ENCODE measurements at regions of chr12 and their contacts with region 1.

Region 1: DNA sequence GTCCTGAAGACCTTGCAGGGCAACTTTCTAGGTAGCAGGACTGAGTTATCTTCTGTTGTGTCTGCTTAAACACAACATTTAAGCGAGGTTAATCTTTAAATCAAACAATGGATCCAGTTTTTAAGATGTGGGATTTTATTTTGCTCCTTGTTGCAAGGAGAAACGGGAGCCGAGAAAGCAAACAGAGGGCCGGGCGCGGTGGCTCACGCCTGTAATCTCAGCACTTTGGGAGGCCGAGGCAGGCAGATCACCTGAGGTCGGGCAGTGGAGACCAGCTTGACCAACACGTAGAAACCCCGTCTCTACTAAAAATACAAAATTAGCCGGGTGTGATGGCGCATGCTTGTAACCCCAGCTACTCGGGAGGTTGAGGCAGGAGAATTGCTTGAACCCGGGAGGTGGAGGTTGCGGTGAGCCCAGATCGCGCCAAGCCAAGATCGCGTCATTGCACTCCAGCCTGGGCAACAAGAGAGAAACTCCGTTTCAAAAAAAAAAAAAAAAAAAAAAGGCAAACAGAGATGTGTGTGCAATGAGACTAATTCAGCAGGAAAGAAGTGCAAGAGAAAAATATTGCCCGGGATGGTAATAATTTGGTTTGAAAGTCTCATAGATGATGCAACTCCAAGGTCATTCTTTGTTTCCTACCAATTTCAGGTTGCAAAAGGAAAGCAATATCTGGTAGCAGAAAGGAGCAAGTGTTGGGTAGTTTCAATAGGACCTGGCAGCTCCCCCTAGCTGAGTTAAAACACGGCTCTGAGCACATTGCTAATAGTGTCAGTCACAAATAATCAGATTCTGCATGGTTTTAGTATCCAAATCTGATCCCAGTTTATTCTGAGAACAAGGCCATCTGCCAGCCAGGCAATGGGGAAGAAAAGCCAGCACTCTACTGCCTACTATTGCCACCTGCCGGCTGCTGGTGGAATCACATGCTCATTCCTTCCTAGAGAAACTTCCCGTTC is 141.4 kb downstream of the PPM1H start:
- DNase-seq: peak; percentile 47 to 85 (median 71)
- ATAC-seq: peak; percentile 83
- H3K4me3 ChIP-seq: no peak overlapping the region
- H3K4me3 Mint-ChIP-seq: no peak overlapping the region
- H3K27ac ChIP-seq: no peak overlapping the region
- H3K27ac Mint-ChIP-seq: no peak overlapping the region
- H3K4me1 ChIP-seq: no peaks in the 10 kb centered on the region
- H3K4me1 Mint-ChIP-seq: no peaks in the 10 kb centered on the region
- H3K27me3 ChIP-seq: no peaks in the 10 kb centered on the region
- H3K27me3 Mint-ChIP-seq: peaks cover 3% of the 10 kb centered on the region
- CTCF ChIP-seq: peak; percentile 93

Region 2: DNA sequence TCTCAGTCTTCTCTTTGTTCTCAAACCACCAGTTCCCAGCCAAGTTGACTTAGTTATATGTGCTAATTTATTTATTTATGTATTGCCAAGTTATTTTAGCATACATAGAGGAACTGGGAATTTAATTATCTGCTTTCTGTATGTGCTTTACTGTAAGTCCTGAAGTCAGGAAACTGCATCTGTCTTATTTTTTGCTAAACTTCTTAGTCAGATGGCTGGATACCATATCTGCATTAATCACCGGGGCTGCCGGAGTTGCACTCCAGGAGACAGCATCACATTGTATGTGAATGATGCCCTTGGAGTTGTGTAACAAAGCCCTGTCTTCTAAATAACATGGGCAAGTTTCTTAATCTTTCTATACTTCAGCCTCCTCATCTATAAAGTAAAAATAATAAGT is 230.7 kb before region 1 on chr12:
- CTCF ChIA-PET with region 1: interaction called, 10 read pairs
- POLR2A ChIA-PET with region 1: no interaction called
- intact Hi-C with region 1: no loop called
- DNase-seq: no peak
- ATAC-seq: no peak
- H3K4me3 ChIP-seq: no peak overlapping the region
- H3K4me3 Mint-ChIP-seq: no peak overlapping the region
- H3K27ac ChIP-seq: no peak overlapping the region
- H3K27ac Mint-ChIP-seq: no peak overlapping the region
- H3K4me1 ChIP-seq: no peaks in the 10 kb centered on the region
- H3K4me1 Mint-ChIP-seq: no peaks in the 10 kb centered on the region
- H3K27me3 ChIP-seq: no peaks in the 10 kb centered on the region
- H3K27me3 Mint-ChIP-seq: no peaks in the 10 kb centered on the region
- CTCF ChIP-seq: no peak

Region 3: DNA sequence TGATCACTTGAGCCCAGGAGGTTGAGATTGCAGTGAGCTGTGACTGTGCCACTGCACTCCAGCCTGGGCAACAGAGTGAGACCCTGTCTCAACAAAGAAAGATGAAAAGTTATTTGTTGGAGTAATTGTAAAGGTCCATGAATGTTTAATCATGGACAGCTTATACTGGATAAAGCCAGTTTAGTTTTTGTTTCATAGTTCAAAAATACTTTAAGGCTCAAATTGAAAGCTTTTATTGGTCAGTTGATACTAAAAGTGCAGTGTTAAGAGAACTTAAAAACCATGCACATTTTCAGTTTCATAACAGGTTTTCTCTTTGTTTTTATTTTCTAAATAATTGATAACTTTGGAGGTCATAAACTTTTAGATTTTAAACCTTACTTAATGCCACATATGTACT is 218.5 kb before region 1 on chr12:
- CTCF ChIA-PET with region 1: interaction called, 211 read pairs
- POLR2A ChIA-PET with region 1: no interaction called
- intact Hi-C with region 1: loop called in 1 of 2 experiments (anchors 1 kb)
- DNase-seq: no peak
- ATAC-seq: no peak
- H3K4me3 ChIP-seq: no peak overlapping the region
- H3K4me3 Mint-ChIP-seq: no peak overlapping the region
- H3K27ac ChIP-seq: no peak overlapping the region
- H3K27ac Mint-ChIP-seq: no peak overlapping the region
- H3K4me1 ChIP-seq: no peaks in the 10 kb centered on the region
- H3K4me1 Mint-ChIP-seq: no peaks in the 10 kb centered on the region
- H3K27me3 ChIP-seq: no peaks in the 10 kb centered on the region
- H3K27me3 Mint-ChIP-seq: no peaks in the 10 kb centered on the region
- CTCF ChIP-seq: no peak

Region 4: DNA sequence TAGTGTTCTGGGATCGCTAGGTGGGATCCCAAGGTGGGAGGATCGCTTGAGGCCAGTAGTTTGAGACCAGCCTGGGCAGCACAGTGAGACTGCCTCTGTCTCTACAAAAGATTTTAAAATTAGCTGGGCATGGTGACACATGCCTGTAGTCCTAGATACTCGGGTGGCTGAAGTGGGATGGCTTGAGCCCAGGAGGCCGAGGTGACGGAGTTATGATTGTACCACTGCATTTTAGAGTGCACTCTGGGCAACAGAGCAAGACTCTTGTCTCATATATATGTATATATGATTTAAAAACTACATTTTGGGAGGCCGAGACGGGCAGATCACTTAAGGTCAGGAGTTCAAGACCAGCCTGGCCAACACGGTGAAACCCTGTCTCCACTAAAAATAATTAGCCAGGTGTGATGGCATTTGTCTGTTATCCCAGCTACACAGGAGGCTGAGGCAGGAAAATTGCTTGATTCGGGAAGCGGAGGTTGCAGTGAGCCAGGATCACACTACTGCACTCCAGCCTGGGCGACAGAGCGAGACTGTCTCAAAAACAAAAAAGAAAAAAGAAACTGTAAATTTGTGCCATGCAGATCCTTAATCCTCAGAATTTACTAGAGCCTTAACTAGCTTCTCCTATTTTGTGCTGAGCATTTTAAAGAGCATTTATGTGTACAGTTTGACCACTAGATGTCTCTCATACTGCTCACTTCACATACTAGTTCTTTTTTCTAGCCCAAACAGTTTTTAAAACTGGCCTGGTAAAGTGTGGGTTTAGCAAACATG is 212.1 kb before region 1 on chr12:
- CTCF ChIA-PET with region 1: interaction called, 211 read pairs
- POLR2A ChIA-PET with region 1: interaction called, 3 read pairs
- intact Hi-C with region 1: loop called (anchors 1 kb)
- DNase-seq: peak in 2 of 9 experiments; percentile 53 to 67
- ATAC-seq: peak; percentile 59
- H3K4me3 ChIP-seq: no peak overlapping the region
- H3K4me3 Mint-ChIP-seq: no peak overlapping the region
- H3K27ac ChIP-seq: no peak overlapping the region
- H3K27ac Mint-ChIP-seq: no peak overlapping the region
- H3K4me1 ChIP-seq: no peaks in the 10 kb centered on the region
- H3K4me1 Mint-ChIP-seq: no peaks in the 10 kb centered on the region
- H3K27me3 ChIP-seq: no peaks in the 10 kb centered on the region
- H3K27me3 Mint-ChIP-seq: no peaks in the 10 kb centered on the region
- CTCF ChIP-seq: peak; percentile 66

Region 5: GRCh38 chr12:62588916-62589315 is 204.6 kb before region 1 on chr12:
- CTCF ChIA-PET with region 1: interaction called, 211 read pairs
- POLR2A ChIA-PET with region 1: interaction called, 3 read pairs
- intact Hi-C with region 1: no loop called
- DNase-seq: no peak
- ATAC-seq: no peak
- H3K4me3 ChIP-seq: no peak overlapping the region
- H3K4me3 Mint-ChIP-seq: no peak overlapping the region
- H3K27ac ChIP-seq: no peak overlapping the region
- H3K27ac Mint-ChIP-seq: no peak overlapping the region
- H3K4me1 ChIP-seq: no peaks in the 10 kb centered on the region
- H3K4me1 Mint-ChIP-seq: no peaks in the 10 kb centered on the region
- H3K27me3 ChIP-seq: no peaks in the 10 kb centered on the region
- H3K27me3 Mint-ChIP-seq: no peaks in the 10 kb centered on the region
- CTCF ChIP-seq: no peak

Region 6: GRCh38 chr12:62805517-62805916 is 12.0 kb after region 1 on chr12:
- CTCF ChIA-PET with region 1: interaction called, 15 read pairs
- POLR2A ChIA-PET with region 1: interaction called, 3 read pairs
- intact Hi-C with region 1: no loop called
- DNase-seq: no peak
- ATAC-seq: no peak
- H3K4me3 ChIP-seq: no peak overlapping the region
- H3K4me3 Mint-ChIP-seq: no peak overlapping the region
- H3K27ac ChIP-seq: no peak overlapping the region
- H3K27ac Mint-ChIP-seq: no peak overlapping the region
- H3K4me1 ChIP-seq: no peaks in the 10 kb centered on the region
- H3K4me1 Mint-ChIP-seq: no peaks in the 10 kb centered on the region
- H3K27me3 ChIP-seq: no peaks in the 10 kb centered on the region
- H3K27me3 Mint-ChIP-seq: no peaks in the 10 kb centered on the region
- CTCF ChIP-seq: no peak